PC-9 (cell line): ENCODE measurements at regions of chr1 and their contacts with region 1.

Region 1: DNA sequence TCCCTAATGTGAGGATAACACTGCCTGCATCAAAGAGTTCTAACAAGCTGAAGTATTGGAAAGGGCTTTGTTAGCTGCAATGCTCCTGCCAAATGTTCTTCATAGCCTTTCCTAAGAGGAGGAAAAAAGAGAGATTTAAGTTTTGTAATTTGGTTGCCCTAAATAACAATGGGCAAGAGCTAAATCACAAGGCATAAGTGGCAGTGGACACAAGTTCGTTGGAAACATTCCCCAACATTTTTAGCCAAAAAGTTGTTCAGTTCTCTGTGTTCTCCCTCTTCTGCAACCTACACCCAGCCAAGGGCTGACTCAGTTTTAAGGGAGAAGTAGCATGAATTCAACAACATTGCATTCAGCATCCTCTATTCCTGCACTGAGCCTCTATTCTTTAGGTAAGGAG is 2.6 kb upstream of the UQCRHL start:
- DNase-seq: no peak
- H3K4me3 ChIP-seq: no peak overlapping the region
- H3K27ac ChIP-seq: no peak overlapping the region
- H3K4me1 ChIP-seq: peaks cover 8% of the 10 kb centered on the region; the same call in 1 of the 2 replicates
- H3K27me3 ChIP-seq: no peaks in the 10 kb centered on the region
- CTCF ChIP-seq: no peak

Region 2: DNA sequence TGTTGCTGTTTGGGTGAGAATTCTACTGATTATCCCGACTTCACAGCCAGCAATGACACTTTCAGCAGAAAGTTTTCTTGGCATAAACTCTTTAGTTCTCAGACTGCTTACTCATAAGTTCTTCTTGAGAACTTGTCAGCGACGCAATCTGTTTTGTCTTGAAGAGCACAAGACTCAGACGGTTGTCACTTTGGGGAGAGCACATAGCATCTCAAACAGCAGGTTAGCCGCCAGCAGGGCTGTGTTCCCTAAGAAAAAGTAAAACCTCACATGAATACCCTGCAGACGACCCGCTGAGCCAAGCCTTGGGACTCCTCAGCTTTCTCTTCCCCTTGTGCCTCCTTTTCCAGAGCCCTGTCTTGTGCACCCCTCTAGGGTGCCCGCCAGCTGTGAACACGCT is 236.6 kb before region 1 on chr1:
- CTCF ChIA-PET with region 1: no interaction called
- POLR2A ChIA-PET with region 1: no interaction called
- intact Hi-C with region 1: no loop called
- DNase-seq: no peak
- H3K4me3 ChIP-seq: no peak overlapping the region
- H3K27ac ChIP-seq: no peak overlapping the region
- H3K4me1 ChIP-seq: no peaks in the 10 kb centered on the region
- H3K27me3 ChIP-seq: no peaks in the 10 kb centered on the region
- CTCF ChIP-seq: no peak

Region 3: GRCh38 chr1:15723631-15724251 is 86.3 kb before region 1 on chr1:
- CTCF ChIA-PET with region 1: no interaction called
- POLR2A ChIA-PET with region 1: no interaction called
- intact Hi-C with region 1: no loop called
- DNase-seq: no peak
- H3K4me3 ChIP-seq: no peak overlapping the region
- H3K27ac ChIP-seq: no peak overlapping the region
- H3K4me1 ChIP-seq: no peaks in the 10 kb centered on the region
- H3K27me3 ChIP-seq: no peaks in the 10 kb centered on the region
- CTCF ChIP-seq: no peak

Region 4: DNA sequence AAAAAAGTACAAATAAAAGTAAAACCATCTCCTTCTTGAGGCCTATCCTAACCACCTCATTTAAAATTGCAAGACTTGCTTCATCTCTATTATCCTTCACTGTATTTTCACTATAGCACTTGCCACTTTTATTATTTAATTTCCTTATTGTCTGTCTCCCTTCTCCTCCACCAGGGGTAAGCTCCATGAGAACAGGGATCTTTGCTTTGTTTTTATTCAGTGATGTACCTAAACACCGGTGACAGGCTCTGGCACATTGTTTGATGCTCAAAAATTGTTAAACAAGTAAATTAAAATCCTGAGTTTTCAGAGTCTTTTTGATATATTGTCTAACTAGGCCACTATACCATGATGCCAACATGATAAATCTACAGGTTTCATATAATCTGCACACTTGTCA is 20.2 kb after region 1 on chr1:
- CTCF ChIA-PET with region 1: no interaction called
- POLR2A ChIA-PET with region 1: no interaction called
- intact Hi-C with region 1: no loop called
- DNase-seq: no peak
- H3K4me3 ChIP-seq: no peak overlapping the region
- H3K27ac ChIP-seq: peak overlapping the region; percentile 17; the same call in 1 of the 2 replicates
- H3K4me1 ChIP-seq: peaks cover 17% of the 10 kb centered on the region
- H3K27me3 ChIP-seq: no peaks in the 10 kb centered on the region
- CTCF ChIP-seq: no peak

Region 5: DNA sequence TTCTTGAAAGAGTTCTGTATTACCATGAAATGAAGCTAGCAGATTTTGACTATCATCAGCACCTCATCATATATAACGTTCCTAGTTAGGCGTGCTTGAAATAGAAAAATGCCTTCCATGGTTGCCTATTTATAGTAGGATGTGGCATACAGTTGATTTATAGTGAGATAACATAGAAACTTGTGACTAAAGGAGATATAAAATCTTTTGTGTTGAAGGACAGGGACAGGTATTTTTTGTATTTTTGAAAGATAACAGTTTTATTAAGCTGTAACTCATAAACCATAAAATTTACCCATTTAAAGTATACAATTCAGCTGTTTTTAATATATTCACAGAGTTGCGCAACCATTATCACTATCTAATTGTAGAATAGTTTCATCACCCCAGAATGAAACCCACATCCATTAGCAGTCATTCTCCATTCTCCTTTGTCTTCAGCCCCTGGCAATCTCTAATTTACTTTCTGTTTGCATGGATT is 56.7 kb after region 1 on chr1:
- CTCF ChIA-PET with region 1: interaction called, 12 read pairs
- POLR2A ChIA-PET with region 1: no interaction called
- intact Hi-C with region 1: no loop called
- DNase-seq: no peak
- H3K4me3 ChIP-seq: no peak overlapping the region
- H3K27ac ChIP-seq: no peak overlapping the region
- H3K4me1 ChIP-seq: no peaks in the 10 kb centered on the region
- H3K27me3 ChIP-seq: no peaks in the 10 kb centered on the region
- CTCF ChIP-seq: no peak

Region 6: GRCh38 chr1:15918962-15919715 is 109.1 kb after region 1 on chr1:
- CTCF ChIA-PET with region 1: interaction called, 10 read pairs
- POLR2A ChIA-PET with region 1: no interaction called
- intact Hi-C with region 1: no loop called
- DNase-seq: peak; percentile 52 to 58
- H3K4me3 ChIP-seq: no peak overlapping the region
- H3K27ac ChIP-seq: peak overlapping the region; percentile 39
- H3K4me1 ChIP-seq: peaks cover 12% of the 10 kb centered on the region
- H3K27me3 ChIP-seq: no peaks in the 10 kb centered on the region
- CTCF ChIP-seq: no peak

Region 7: DNA sequence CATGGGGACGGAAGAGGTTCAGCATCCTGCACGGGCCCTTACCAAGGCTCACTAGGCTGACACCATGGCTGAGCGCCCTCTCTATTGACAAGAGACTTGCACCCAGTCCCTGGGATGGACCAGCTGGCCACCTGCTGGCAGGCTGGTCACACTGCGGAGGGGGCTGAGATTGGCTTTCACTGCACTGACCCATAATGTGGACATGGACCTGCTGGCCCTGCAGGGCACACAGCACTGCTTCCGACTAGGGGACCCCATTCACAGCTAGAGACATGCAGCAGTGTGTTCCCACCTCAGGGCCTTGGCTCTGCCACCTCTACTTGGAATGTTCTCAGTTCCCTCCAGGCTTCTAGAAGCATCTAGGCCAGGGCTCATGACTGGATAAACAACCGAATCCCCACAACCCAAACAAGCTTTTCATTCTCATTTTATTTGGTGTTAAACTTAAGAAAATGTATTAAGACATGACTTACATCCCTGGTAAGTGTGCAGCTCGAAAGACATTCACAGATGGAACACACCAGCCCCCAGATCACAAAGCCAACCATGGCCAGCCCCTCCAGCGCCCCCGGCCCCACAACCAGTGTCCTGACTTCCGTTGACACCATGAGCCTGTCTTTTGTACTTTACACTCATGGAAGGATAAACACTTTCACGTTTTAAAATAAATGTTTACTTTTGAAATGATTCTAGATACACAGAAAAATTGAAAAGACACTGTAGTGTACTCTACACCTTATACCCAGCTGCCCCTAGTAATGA is 184.7 kb after region 1 on chr1:
- CTCF ChIA-PET with region 1: interaction called, 17 read pairs
- POLR2A ChIA-PET with region 1: no interaction called
- intact Hi-C with region 1: no loop called
- DNase-seq: peak in 1 of 2 experiments; percentile 55
- H3K4me3 ChIP-seq: no peak overlapping the region
- H3K27ac ChIP-seq: no peak overlapping the region
- H3K4me1 ChIP-seq: no peaks in the 10 kb centered on the region
- H3K27me3 ChIP-seq: no peaks in the 10 kb centered on the region
- CTCF ChIP-seq: peak; percentile 68